T-cell (primary cell): ENCODE measurements at regions of chr1 and their contacts with region 1.

Region 1: GRCh38 chr1:209565759-209566678 is 17.5 kb upstream of the CAMK1G start:
- DNase-seq: peak; percentile 32 to 83 (median 64)
- ATAC-seq: peak; percentile 64 to 87 (median 82)
- H3K4me3 ChIP-seq: no peak overlapping the region
- H3K4me3 Mint-ChIP-seq: no peak overlapping the region
- H3K27ac ChIP-seq: no peak overlapping the region
- H3K27ac Mint-ChIP-seq: no peak overlapping the region
- H3K4me1 ChIP-seq: peaks cover 2 to 6% of the 10 kb centered on the region in 2 experiments
- H3K4me1 Mint-ChIP-seq: peaks cover 10 to 21% (median 10%) of the 10 kb centered on the region in 3 donors
- H3K27me3 ChIP-seq: peaks cover 0 to 39% of the 10 kb centered on the region in 2 experiments
- H3K27me3 Mint-ChIP-seq: peaks cover 32 to 35% of the 10 kb centered on the region in 2 donors

Region 2: DNA sequence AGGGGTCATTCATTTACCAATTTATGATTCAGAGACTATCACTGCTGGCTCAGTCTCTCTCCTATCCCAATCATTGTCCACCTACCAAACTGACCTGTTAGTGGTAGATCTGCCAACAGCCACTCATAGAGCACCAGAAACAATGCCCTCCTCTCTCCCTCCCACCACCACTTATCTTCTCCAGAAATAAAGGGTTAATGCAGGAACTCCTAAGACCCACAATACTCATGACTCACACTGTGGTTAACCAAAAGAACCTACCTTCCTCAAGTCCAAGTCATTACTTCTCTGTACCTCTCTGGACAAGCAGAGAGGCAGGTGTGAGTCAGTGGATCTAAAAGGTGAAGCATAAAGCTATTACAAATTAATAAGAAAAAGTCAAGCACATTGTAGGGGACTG is 23.4 kb before region 1 on chr1:
- CTCF ChIA-PET with region 1: no interaction called
- POLR2A ChIA-PET with region 1: no interaction called
- DNase-seq: no peak
- ATAC-seq: no peak
- H3K4me3 ChIP-seq: no peak overlapping the region
- H3K4me3 Mint-ChIP-seq: no peak overlapping the region
- H3K27ac ChIP-seq: no peak overlapping the region
- H3K27ac Mint-ChIP-seq: no peak overlapping the region
- H3K4me1 ChIP-seq: no peaks in the 10 kb centered on the region
- H3K4me1 Mint-ChIP-seq: no peaks in the 10 kb centered on the region
- H3K27me3 ChIP-seq: peaks cover 2 to 13% of the 10 kb centered on the region in 2 experiments
- H3K27me3 Mint-ChIP-seq: peaks cover 23 to 38% of the 10 kb centered on the region in 2 donors

Region 3: GRCh38 chr1:209576798-209577197 is 10.8 kb after region 1 on chr1:
- CTCF ChIA-PET with region 1: interaction called, 8 to 10 read pairs
- POLR2A ChIA-PET with region 1: no interaction called
- DNase-seq: peak; percentile 7 to 73 (median 43)
- ATAC-seq: peak; percentile 57 to 80 (median 78)
- H3K4me3 ChIP-seq: no peak overlapping the region
- H3K4me3 Mint-ChIP-seq: no peak overlapping the region
- H3K27ac ChIP-seq: no peak overlapping the region
- H3K27ac Mint-ChIP-seq: no peak overlapping the region
- H3K4me1 ChIP-seq: no peaks in the 10 kb centered on the region
- H3K4me1 Mint-ChIP-seq: no peaks in the 10 kb centered on the region
- H3K27me3 ChIP-seq: peaks cover 5 to 10% of the 10 kb centered on the region in 2 experiments
- H3K27me3 Mint-ChIP-seq: peaks cover 5 to 11% of the 10 kb centered on the region in 2 donors

Region 4: GRCh38 chr1:209583408-209583807 is 17.4 kb after region 1 on chr1 and contains the start of gene CAMK1G:
- CTCF ChIA-PET with region 1: interaction called, 10 read pairs
- POLR2A ChIA-PET with region 1: no interaction called
- DNase-seq: no peak
- ATAC-seq: no peak
- H3K4me3 ChIP-seq: no peak within 1 kb of the TSS
- H3K4me3 Mint-ChIP-seq: no peak within 1 kb of the TSS
- H3K27ac ChIP-seq: no peak within 1 kb of the TSS
- H3K27ac Mint-ChIP-seq: no peak within 1 kb of the TSS
- H3K4me1 ChIP-seq: no peaks in the 10 kb centered on the region
- H3K4me1 Mint-ChIP-seq: no peaks in the 10 kb centered on the region
- H3K27me3 ChIP-seq: peaks cover 12 to 36% of the 10 kb centered on the region in 2 experiments
- H3K27me3 Mint-ChIP-seq: peaks cover 9 to 14% of the 10 kb centered on the region in 2 donors
- total RNA-seq, gene CAMK1G: not detected